ENCODE measurements at regions of chr5 and their contacts with region 1.

Region 1: GRCh38 chr5:101390151-101390908 is 487.2 kb upstream of the ST8SIA4 start:
- DNase-seq: peak; percentile 36

Region 2: GRCh38 chr5:100913298-100913697 is 477.0 kb before region 1 on chr5:
- CTCF ChIA-PET with region 1: interaction called, 10 read pairs
- POLR2A ChIA-PET with region 1: no interaction called
- DNase-seq: no peak

Region 3: GRCh38 chr5:101404528-101404927 is 14.2 kb after region 1 on chr5:
- CTCF ChIA-PET with region 1: no interaction called
- POLR2A ChIA-PET with region 1: no interaction called
- DNase-seq: no peak

Measured in HEK293T (cell line).